ENCODE measurements at regions of chr7 and their contacts with region 1.

Region 1: GRCh38 chr7:101185258-101185839 is 5.3 kb upstream of the NAT16 start:
- DNase-seq: no peak
- ATAC-seq: no peak
- H3K4me3 ChIP-seq: no peak overlapping the region
- H3K27ac ChIP-seq: no peak overlapping the region
- H3K4me1 ChIP-seq: no peaks in the 10 kb centered on the region
- H3K27me3 ChIP-seq: peaks cover 0 to 2% of the 10 kb centered on the region in 2 experiments; a peak in 2 of 4 replicates
- CTCF ChIP-seq: no peak
- EP300 ChIP-seq: no peak
- POLR2A ChIP-seq: no peak
- RAD21 ChIP-seq: no peak

Region 2: DNA sequence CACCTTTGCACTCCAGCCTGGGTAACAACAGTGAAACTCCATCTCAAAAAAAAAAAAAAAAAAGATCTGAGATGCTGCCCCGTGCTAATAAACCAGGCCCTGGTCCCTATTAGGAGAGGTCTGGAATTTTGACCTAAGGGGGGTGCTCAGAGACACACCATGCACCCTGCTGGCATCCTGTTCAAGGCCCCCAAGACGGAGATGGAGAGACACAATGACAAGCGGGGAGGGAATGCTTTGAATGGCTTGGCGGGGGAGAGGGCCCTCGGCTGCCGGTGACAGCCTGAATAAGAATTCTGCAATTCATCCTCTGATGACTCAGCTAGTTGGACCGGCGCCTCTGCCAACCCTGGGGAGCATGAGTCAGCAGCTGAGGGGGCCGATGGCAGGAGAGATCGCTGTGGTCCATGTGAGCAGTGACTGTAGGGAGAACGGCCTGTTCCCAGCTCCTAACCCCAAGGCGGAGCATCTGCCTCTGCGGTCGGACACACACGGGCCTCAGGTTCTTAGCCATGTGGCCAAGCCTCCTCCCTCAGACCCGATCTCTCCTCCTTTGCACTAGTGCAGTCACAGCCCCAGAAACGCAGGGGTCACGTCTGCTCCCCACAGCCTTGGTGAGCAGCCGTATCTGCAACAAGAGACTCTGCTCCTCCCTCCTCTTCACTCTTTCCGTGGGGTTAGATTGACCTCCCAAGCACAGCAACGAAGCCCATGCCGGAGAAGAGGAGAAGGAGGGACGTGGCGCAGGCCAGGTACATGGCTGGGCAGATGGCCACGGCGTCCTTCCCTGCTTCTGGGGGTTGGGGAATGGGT is 85.2 kb before region 1 on chr7:
- CTCF ChIA-PET with region 1: no interaction called
- POLR2A ChIA-PET with region 1: no interaction called
- RAD21 ChIA-PET with region 1: no interaction called
- SMC1A ChIA-PET with region 1: no interaction called
- in situ Hi-C with region 1: no loop called
- intact Hi-C with region 1: loop called (anchors 5 kb)
- DNase-seq: no peak
- ATAC-seq: peak; percentile 74
- H3K4me3 ChIP-seq: no peak overlapping the region
- H3K27ac ChIP-seq: no peak overlapping the region
- H3K4me1 ChIP-seq: no peaks in the 10 kb centered on the region
- H3K27me3 ChIP-seq: no peaks in the 10 kb centered on the region
- CTCF ChIP-seq: no peak
- EP300 ChIP-seq: no peak
- POLR2A ChIP-seq: no peak
- RAD21 ChIP-seq: no peak

Region 3: GRCh38 chr7:101165075-101165957 is 20.0 kb before region 1 on chr7 and contains the start of gene VGF:
- CTCF ChIA-PET with region 1: interaction called, 3 read pairs
- POLR2A ChIA-PET with region 1: no interaction called
- RAD21 ChIA-PET with region 1: no interaction called
- SMC1A ChIA-PET with region 1: no interaction called
- in situ Hi-C with region 1: no loop called
- intact Hi-C with region 1: loop called (anchors 1 kb)
- DNase-seq: no peak
- ATAC-seq: peak; percentile 82
- H3K4me3 ChIP-seq: peak within 1 kb of the TSS; percentile 44; the same call in 1 of the 2 replicates
- H3K27ac ChIP-seq: no peak within 1 kb of the TSS
- H3K4me1 ChIP-seq: peaks cover 11% of the 10 kb centered on the region
- H3K27me3 ChIP-seq: peaks cover 17 to 27% of the 10 kb centered on the region in 2 experiments; a peak in 3 of 4 replicates
- CTCF ChIP-seq: no peak
- EP300 ChIP-seq: no peak
- POLR2A ChIP-seq: 0 out of 2 replicates have a peak, but pooled peaks have one; percentile 18
- RAD21 ChIP-seq: no peak
- polyA plus RNA-seq, gene VGF: not detected

Region 4: DNA sequence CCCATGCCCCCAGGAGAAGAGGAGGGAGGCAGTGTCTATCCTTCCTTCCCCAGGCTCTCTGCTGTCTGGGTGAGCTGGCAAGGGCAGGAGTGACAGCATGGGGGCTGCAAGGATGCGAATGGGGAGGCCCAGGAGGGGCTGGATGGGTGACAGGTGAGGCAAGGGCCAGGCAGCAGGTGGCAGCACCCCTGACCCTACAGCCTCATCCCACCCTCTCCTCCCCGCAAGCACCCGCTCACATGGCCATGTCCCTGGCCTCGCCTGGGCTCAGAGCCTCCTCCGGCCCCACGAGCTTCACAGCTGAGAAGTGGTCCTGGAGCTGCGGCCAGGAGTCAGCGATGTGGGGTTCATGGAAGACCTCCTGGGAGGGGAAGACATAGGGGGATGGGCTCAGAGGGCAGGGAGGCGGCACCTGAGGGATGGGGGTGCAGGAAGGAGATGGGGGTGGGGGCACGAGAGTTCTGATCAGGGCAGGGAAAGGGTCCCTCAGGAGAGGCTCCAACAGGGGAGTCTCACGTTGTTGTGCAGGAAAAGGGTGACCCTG is 26.7 kb after region 1 on chr7:
- CTCF ChIA-PET with region 1: no interaction called
- POLR2A ChIA-PET with region 1: no interaction called
- RAD21 ChIA-PET with region 1: no interaction called
- SMC1A ChIA-PET with region 1: no interaction called
- in situ Hi-C with region 1: no loop called
- intact Hi-C with region 1: no loop called
- DNase-seq: no peak
- ATAC-seq: no peak
- H3K4me3 ChIP-seq: no peak overlapping the region
- H3K27ac ChIP-seq: no peak overlapping the region
- H3K4me1 ChIP-seq: peaks cover 5% of the 10 kb centered on the region
- H3K27me3 ChIP-seq: no peaks in the 10 kb centered on the region
- CTCF ChIP-seq: no peak
- EP300 ChIP-seq: no peak
- POLR2A ChIP-seq: no peak
- RAD21 ChIP-seq: no peak

Region 5: DNA sequence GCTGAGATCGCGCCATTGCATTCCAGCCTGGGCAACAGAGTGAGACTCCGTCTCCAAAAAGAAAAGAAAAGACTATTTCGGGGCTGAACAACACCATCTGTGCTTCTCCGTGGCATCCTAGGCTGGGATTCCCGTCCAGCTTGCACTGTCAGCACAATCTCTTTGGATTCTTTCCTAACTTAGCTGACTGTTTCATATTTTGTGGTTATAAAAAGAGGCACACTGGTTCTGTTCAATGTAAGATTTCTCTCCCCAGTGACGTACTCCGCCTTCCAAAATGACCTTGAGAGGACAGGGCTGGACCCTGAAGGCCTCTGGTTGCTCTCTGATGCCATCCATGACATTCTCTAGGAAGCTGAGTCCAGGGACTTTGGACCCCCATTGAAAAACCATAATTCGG is 41.4 kb after region 1 on chr7:
- CTCF ChIA-PET with region 1: no interaction called
- POLR2A ChIA-PET with region 1: no interaction called
- RAD21 ChIA-PET with region 1: no interaction called
- SMC1A ChIA-PET with region 1: no interaction called
- in situ Hi-C with region 1: no loop called
- intact Hi-C with region 1: no loop called
- DNase-seq: no peak
- ATAC-seq: no peak
- H3K4me3 ChIP-seq: no peak overlapping the region
- H3K27ac ChIP-seq: no peak overlapping the region
- H3K4me1 ChIP-seq: no peaks in the 10 kb centered on the region
- H3K27me3 ChIP-seq: no peaks in the 10 kb centered on the region
- CTCF ChIP-seq: no peak
- EP300 ChIP-seq: no peak
- POLR2A ChIP-seq: no peak
- RAD21 ChIP-seq: no peak

Measured in GM12878 (cell line).